Motor neuron (in vitro differentiated cells): ENCODE measurements at regions of chr13 and their contacts with region 1.

Region 1: DNA sequence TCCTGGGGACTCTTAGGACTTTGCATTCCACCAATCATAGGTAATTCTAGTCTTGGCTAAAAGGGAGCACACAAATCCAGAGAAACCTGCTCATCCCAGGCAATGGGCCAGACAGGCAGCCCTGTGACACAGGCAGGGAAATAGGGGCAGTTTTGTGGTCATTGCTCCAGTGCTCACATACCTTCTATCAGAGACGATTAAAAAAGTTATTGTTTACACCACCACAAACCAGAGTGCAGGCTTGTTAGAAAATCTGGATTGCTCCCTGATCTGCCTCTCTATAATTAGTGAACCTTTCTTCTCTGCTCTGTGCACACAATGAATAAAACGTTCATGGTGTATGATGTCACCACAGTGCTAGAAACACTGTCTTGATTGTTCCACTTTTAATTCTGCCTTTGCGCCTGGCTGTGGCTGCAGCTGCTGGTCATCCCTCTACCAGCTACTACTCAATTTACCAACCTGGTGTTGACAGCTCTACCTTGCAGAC is 121.6 kb upstream of the SPATA13 start:
- ATAC-seq: peak in 5 of 8 experiments; percentile 88 to 93 (median 91)
- H3K4me3 ChIP-seq: no peak overlapping the region
- H3K27ac ChIP-seq: peak overlapping the region; percentile 22 to 53
- H3K4me1 ChIP-seq: peaks cover 29 to 59% of the 10 kb centered on the region in 2 donors

Region 2: DNA sequence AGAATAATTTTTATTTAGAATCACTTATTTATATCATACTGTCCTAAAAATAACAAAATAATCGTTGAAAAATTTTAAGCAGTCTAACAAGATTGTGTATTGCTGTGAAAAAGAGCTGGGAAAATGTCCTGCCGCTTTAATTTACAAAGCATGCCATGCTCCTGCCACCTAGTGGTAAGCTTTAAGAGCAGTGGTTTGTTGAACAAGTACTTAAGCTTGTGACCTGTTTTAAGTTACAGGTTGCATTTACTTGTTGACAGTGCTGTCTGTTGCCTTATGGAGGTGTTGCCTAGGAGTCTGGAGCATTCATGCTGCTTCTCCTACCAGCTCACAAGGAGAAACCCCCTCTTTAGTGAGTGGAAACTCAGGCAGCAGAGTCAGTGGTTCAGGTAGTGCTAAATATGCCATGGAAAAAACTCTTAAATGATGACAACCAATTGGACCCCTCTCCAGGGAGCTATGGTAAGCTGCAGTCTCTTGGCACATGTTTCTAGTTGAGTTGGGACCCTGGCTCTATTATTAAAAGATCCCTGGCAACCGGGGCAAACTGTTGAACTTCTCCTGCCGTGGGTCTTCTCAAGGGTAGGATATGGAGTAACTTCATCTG is 190.1 kb after region 1 on chr13:
- in situ Hi-C with region 1: loop called in 3 of 9 experiments (anchors 25 kb)
- ATAC-seq: peak in 4 of 8 experiments; percentile 28 to 69 (median 48)
- H3K4me3 ChIP-seq: no peak overlapping the region
- H3K27ac ChIP-seq: no peak overlapping the region
- H3K4me1 ChIP-seq: no peaks in the 10 kb centered on the region